HEK293 (cell line): ENCODE measurements at regions of chr21 and their contacts with region 1.

Region 1: GRCh38 chr21:36989699-36990507 is 16.6 kb upstream of the RIPPLY3 start:
- H3K4me3 ChIP-seq: peak overlapping the region; percentile 53
- H3K27ac ChIP-seq: peak overlapping the region; percentile 77
- H3K4me1 ChIP-seq: no peaks in the 10 kb centered on the region
- CTCF ChIP-seq: peak; percentile 90

Region 2: DNA sequence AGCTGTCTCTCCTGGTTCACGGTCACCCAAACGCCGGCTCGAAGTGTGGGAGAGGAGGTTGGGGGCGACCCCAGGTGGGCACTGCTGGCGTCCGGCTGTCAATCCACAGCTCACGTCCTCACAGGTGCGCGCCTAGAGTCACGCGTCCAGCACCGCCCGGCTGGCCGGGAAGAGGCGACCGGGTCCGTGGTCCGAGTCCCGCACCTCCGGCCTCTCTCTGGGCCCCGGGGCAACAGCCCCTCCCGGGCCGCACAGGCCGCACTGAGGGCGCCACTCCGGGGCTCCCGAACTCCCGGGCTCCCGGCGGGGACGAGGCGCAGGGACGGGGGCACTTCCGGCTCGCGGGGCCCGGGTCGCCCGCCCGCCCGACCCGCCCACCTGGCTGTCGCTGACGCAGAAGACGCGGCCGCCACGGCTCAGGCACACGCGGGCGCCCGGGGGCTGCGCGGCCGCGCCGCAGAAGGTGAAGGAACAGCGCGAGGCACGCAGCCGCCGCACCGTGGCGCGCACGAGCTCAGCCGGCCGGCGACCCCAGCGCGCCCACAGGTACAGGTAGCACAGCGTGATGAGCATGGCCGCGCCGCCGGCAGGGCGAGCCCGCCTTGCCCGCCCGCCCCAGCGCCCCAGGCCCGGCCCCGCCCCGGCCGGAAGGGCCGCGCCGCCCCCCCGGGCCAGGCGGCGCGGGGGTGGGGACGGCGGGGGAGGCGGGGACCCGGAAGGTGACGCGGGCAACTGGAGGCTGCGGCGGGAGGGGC is 23.7 kb before region 1 on chr21 and contains the start of gene HLCS:
- CTCF ChIA-PET with region 1: interaction called, 7 read pairs
- POLR2A ChIA-PET with region 1: interaction called, 14 read pairs
- H3K4me3 ChIP-seq: peak within 1 kb of the TSS; percentile 80
- H3K27ac ChIP-seq: peak within 1 kb of the TSS; percentile 84
- H3K4me1 ChIP-seq: peaks cover 8% of the 10 kb centered on the region; the same call in 1 of the 2 replicates
- CTCF ChIP-seq: peak; percentile 75

Region 3: DNA sequence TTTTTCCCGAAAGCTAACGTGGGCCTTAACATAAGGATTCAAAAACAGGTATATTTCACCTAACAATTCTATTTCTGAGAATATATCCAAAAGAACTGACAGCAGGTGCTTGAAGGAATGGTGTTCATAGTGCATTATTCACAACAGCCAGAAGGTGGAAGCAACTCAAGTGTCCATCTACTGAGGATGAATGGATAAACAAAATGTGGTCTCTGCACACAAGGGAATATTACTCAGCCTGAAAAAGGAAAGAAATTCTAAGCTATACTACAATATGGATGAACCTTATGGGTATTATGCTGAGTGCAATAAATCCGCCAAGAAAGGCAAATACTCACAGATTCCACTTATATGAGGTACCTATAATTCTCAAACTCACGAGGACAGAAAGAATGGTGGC is 10.5 kb after region 1 on chr21:
- CTCF ChIA-PET with region 1: interaction called, 10 read pairs
- POLR2A ChIA-PET with region 1: no interaction called
- H3K4me3 ChIP-seq: no peak overlapping the region
- H3K27ac ChIP-seq: no peak overlapping the region
- H3K4me1 ChIP-seq: no peaks in the 10 kb centered on the region
- CTCF ChIP-seq: no peak

Region 4: DNA sequence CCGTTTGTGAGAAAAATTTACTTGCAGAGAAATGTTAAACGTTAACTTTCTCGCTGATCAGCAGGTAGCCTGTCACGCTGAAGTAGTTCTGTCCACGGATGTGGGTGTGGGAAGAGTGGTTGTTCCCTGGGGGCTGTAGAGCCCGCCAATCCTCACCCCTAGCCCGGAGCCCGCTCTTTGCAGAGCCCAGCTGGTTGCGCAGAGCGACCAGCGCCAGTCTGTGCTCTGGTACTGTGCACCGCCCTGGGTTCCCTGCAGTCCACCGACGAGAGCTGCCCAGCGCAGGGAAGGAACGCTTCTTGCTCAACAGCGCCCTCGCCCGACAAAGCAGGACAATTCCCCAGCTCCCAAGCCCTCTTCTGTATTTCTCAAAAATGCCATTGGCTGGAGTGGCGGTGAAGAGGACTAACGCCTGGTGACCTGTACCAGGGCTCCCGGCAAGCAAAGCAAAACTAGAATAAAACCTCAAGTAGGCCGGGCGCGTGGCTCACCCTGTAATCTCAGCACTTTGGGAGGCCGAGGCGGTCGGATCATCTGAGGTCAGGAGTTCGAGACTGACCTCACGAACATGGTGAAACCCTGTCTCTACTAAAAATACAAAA is 19.9 kb after region 1 on chr21:
- CTCF ChIA-PET with region 1: interaction called, 13 read pairs
- POLR2A ChIA-PET with region 1: interaction called, 9 read pairs
- H3K4me3 ChIP-seq: peak overlapping the region; percentile 28
- H3K27ac ChIP-seq: no peak overlapping the region
- H3K4me1 ChIP-seq: no peaks in the 10 kb centered on the region; the same call in 1 of the 2 replicates
- CTCF ChIP-seq: peak; percentile 97